Activated T-helper 1 cell treated with anti-CD3 and anti-CD28 coated beads, Interleukin-12 subunit alpha, Interleukin-12 subunit beta, Interleukin-2, Interleukin-4 antibody, amounts not matched to agents 30 ng/mL and 10 ng/mL and 1 ng/mL, durations not matched to agents 14 hours and 24 hours and 36 hours (primary cell): ENCODE measurements at regions of chr2 and their contacts with region 1.

Region 1: DNA sequence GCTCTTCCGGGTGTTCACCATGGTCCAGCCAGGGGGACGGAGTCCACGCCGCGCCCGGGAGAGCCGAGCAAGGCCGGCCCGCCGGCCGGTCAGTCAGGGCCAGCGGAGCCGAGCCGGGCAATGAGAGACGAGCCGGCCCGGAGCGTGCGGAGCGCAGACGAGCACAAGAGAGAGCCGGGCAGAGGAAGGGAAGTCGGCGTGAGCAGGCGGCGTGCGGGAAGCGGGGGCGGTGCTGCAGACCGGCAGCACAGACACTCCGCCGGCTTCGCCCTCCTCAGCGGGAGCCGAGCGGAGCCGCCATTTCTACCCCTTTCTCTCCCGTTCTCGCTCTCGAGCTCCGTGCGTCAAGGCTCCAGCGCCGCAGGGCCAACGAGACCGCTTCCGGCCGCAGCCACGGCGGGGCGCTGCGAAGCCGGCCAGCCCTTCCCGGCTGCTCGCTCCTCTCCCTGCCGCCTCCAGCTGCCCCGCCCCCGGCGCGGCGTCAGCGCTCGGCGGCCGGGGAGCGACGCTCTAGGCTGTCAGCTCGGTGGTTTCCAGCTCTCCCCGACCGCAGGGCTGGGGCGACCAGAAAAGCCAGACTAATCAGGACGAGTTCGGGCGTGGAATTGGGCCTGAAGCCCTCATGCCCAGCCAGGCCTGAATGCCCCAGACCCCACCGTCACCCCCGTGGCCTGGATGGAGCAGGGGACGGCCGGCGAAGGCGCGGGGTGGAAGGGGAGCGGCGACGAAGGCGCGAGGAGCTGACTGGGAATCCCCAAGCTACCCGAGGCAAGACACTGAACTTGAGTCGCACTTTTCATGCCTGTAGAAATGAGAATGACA is at the start of gene ATAD2B:
- DNase-seq: peak; percentile 93
- H3K4me3 Mint-ChIP-seq: peak within 1 kb of the TSS; percentile 95
- H3K27ac Mint-ChIP-seq: peak within 1 kb of the TSS; percentile 99
- H3K4me1 Mint-ChIP-seq: peaks cover 40% of the 10 kb centered on the region
- H3K27me3 Mint-ChIP-seq: peaks cover 2% of the 10 kb centered on the region
- total RNA-seq, gene ATAD2B: 25.9 and 27.8 TPM in 2 replicates

Region 2: GRCh38 chr2:23824777-23825212 is 102.2 kb before region 1 on chr2:
- intact Hi-C with region 1: loop called (anchors 1 kb)
- DNase-seq: no peak
- H3K4me3 Mint-ChIP-seq: no peak overlapping the region
- H3K27ac Mint-ChIP-seq: no peak overlapping the region
- H3K4me1 Mint-ChIP-seq: no peaks in the 10 kb centered on the region
- H3K27me3 Mint-ChIP-seq: no peaks in the 10 kb centered on the region

Region 3: DNA sequence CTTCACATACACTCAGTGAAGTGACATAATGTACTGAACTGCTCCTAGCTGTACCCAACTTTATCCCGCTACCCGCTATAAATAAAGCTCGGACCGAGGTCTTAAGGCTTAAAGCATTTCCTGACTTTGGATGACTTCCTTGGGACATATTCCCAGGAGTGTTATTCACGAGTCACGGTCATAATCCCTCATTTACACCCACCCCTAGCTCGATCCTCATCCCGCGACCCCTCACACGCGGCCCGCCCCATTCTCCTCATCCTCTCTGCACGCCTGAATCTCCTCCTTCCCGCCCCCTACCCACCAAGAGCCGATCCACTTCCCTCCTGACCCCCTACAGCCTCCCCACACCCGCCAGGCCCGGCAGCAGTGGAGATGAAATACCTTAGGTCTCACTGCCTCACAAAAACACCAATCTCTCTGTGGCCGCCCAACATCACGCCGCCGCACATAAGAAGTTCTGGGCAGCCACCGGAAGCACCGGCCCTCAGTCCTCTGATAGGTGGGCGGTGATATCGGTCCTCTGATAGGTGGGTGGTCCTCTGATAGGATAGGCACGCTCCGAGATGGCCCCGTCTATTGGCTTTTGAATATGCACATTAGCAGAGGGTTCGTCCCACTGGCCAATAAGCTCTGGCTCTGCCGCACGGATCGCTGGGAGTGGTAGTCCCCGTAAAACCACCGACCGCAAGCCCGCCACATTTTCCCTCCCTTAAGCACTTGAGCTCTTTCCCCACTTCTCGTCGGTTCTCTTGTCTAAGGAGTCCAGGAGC is 120.2 kb after region 1 on chr2 and contains the start of gene WDCP:
- intact Hi-C with region 1: loop called (anchors 1 kb)
- DNase-seq: peak; percentile 92
- H3K4me3 Mint-ChIP-seq: peak within 1 kb of the TSS; percentile 94
- H3K27ac Mint-ChIP-seq: peak within 1 kb of the TSS; percentile 86
- H3K4me1 Mint-ChIP-seq: peaks cover 24% of the 10 kb centered on the region
- H3K27me3 Mint-ChIP-seq: no peaks in the 10 kb centered on the region
- total RNA-seq, gene WDCP: 21.9 and 23.1 TPM in 2 replicates

Region 4: GRCh38 chr2:24084386-24085361 is 157.7 kb after region 1 on chr2 and contains the start of gene TP53I3:
- intact Hi-C with region 1: loop called (anchors 2 kb)
- DNase-seq: peak; percentile 77
- H3K4me3 Mint-ChIP-seq: peak within 1 kb of the TSS; percentile 85
- H3K27ac Mint-ChIP-seq: peak within 1 kb of the TSS; percentile 75
- H3K4me1 Mint-ChIP-seq: peaks cover 18% of the 10 kb centered on the region
- H3K27me3 Mint-ChIP-seq: no peaks in the 10 kb centered on the region
- total RNA-seq, gene TP53I3: 0.70 and 0.96 TPM in 2 replicates

Region 5: GRCh38 chr2:24315669-24316068 is 388.7 kb after region 1 on chr2:
- intact Hi-C with region 1: no loop called
- DNase-seq: no peak
- H3K4me3 Mint-ChIP-seq: no peak overlapping the region
- H3K27ac Mint-ChIP-seq: no peak overlapping the region
- H3K4me1 Mint-ChIP-seq: peaks cover 10% of the 10 kb centered on the region
- H3K27me3 Mint-ChIP-seq: no peaks in the 10 kb centered on the region

Region 6: GRCh38 chr2:24360050-24360962 is 433.3 kb after region 1 on chr2 and contains the start of gene ITSN2:
- intact Hi-C with region 1: loop called (anchors 5 kb)
- DNase-seq: peak; percentile 81
- H3K4me3 Mint-ChIP-seq: peak within 1 kb of the TSS; percentile 91
- H3K27ac Mint-ChIP-seq: peak within 1 kb of the TSS; percentile 93
- H3K4me1 Mint-ChIP-seq: peaks cover 29% of the 10 kb centered on the region
- H3K27me3 Mint-ChIP-seq: no peaks in the 10 kb centered on the region
- total RNA-seq, gene ITSN2: 52.9 and 57.1 TPM in 2 replicates